Ovary (tissue), 10 donors: ENCODE measurements at regions of chr2 and their contacts with region 1.

Region 1: DNA sequence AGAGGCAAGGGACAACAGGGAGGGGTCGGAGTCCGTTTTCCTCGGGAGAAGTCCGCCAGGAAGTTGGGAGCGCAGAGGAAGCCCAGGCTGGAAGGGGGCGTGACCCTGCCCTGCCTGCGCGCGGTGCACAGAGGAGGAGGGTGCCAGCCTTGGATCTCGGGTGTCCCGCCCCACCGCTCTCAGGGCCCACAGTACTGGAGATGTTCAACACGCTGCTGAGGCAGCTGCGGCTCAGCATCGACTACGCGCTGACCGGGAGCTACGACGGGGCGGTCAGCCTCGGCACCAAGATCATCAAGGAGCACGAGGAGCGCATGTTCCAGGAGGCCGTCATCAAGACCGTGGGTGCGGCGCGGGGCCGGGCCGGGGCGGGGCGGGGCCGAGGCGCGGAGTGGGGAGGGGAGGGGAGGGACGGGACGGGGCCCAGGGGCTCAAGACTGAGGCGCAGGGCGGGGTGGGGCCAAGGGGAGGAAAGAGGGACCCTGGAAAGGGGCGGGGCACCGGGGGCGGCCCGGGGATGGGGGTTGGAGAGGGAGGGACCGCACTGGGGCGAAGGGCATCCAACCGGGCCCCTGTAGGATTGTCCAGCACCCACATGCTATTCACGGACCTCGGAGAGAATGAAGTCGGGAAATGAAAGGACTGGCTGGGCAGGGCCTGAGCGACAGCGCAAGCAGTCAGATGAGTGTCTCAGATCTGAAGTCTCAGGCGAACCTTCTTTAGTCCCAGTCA is 36.6 kb downstream of the POMC start:
- DNase-seq: peak in 3 of 5 donors; percentile 18 to 57 (median 40)
- H3K4me3 ChIP-seq: no peak overlapping the region
- H3K27ac ChIP-seq: no peak overlapping the region
- H3K4me1 ChIP-seq: peaks cover 2% of the 10 kb centered on the region
- H3K27me3 ChIP-seq: no peaks in the 10 kb centered on the region
- CTCF ChIP-seq: no peak
- EP300 ChIP-seq: no peak
- POLR2A ChIP-seq: no peak

Region 2: DNA sequence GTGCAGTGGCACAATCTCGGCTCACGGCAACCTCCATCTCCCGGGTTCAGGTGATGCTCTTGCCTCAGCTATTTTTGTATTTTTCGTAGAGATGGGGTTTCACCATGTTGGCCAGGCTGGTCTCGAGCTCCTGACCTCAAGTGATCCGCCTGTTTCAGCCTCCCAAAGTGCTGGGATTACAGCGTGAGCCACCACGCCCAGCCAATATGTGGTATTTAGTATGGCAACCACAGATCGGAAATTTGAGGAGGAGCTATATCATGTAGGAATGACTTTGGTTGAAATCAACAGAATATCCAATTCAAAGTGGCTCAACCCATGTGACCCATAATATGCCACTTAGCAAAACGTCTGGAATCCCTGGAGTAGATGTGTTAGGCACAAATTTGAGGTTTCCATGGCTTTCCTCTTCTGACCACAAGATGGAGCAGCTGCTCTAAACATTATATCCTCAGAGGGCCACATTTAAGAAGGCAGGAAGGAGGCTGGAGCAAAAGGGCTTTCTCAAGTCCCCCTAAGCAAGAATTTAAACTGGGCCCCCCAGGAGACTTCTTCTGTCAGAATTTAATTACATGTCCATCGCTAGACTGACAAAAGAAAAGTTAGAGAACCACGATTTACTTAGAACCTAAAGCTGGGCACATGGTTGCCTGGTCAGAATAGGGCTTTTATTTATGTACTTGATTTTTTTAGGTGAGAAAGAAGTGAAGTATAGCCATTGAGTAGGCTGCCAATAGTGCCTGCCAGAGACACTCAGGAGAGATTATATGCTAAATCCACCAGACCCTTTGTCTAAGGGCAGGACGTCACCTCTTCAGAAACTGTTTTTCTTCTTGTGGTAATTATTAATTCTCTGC is 721.8 kb before region 1 on chr2:
- intact Hi-C with region 1: loop called in 2 of 4 experiments (anchors 5 to 10 kb)
- DNase-seq: peak in 1 of 5 donors; percentile 59
- H3K4me3 ChIP-seq: no peak overlapping the region
- H3K27ac ChIP-seq: no peak overlapping the region
- H3K4me1 ChIP-seq: no peaks in the 10 kb centered on the region
- H3K27me3 ChIP-seq: no peaks in the 10 kb centered on the region
- CTCF ChIP-seq: peak; percentile 46 to 84 (median 78)
- EP300 ChIP-seq: no peak
- POLR2A ChIP-seq: no peak

Region 3: DNA sequence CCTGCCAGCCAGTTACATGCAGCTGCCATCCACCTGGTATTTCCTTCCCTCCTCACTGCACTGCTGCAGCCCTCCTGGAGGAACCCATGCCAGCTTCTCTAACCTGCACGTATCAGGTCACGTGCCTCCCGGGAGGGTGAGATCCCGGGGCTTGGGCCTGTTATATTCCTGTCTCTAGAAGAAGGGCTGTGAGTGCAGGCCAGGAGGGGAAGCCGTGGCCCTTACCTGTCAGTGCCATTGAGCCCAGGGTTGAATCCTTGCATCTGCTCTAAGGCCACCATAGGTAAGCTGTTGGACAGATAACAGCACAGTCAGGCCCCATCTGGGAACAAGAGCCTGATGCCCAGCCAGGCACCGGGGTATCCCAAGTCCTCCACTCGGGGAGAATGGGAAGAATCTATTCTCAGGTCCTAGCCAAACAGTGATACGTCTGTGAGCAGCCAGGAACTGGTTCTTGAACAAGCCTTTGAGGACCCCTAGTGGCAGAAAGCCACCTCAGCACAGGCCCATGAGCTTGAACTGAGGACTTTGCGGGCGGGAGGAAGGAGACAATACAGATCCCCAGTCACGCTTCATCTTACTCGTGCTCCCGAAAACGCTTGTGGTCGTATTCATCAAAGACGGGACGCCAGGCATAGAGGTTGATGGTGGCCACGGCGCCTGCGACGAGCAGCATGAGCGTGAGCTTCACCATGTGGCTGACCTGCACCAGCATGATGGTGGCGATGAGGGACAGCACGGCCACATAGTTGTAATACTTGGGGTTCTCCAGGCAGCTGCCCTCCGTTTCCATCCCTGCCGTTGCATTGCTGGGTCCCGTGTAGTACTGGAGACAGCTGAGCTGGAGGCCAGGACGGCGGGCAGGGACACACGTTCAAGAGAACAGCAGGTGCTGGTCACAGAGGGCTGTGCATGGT is 304.2 kb before region 1 on chr2:
- intact Hi-C with region 1: loop called in 2 of 4 experiments (anchors 10 kb)
- DNase-seq: peak; percentile 78 to 89 (median 83)
- H3K4me3 ChIP-seq: no peak overlapping the region
- H3K27ac ChIP-seq: no peak overlapping the region
- H3K4me1 ChIP-seq: no peaks in the 10 kb centered on the region
- H3K27me3 ChIP-seq: no peaks in the 10 kb centered on the region
- CTCF ChIP-seq: peak; percentile 81 to 85 (median 83)
- EP300 ChIP-seq: no peak
- POLR2A ChIP-seq: no peak

Region 4: DNA sequence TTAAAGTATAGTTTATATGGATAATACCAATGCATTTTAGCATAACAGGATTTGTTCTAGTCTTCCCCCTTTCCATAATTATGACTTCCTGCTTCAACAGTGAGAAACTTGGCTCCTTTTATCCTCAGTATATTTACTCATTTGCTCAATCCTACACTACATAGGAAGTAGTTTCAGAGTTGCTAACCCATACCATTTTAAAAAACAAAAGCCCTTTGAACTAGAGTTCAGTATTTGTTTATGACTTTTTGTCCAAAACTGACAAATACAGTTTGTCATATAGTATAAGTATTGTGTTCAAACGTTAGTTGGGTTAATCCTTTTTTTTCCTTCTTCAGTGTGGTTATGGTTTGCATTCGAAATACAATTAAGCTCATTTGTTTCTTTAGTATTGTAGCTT is 154.1 kb before region 1 on chr2:
- intact Hi-C with region 1: loop called in 3 of 4 experiments (anchors 5 kb)
- DNase-seq: no peak
- H3K4me3 ChIP-seq: no peak overlapping the region
- H3K27ac ChIP-seq: no peak overlapping the region
- H3K4me1 ChIP-seq: peaks cover 1% of the 10 kb centered on the region
- H3K27me3 ChIP-seq: no peaks in the 10 kb centered on the region
- CTCF ChIP-seq: no peak
- EP300 ChIP-seq: no peak
- POLR2A ChIP-seq: no peak

Region 5: GRCh38 chr2:25032094-25032493 is 99.6 kb before region 1 on chr2:
- intact Hi-C with region 1: loop called in 1 of 4 experiments (anchors 10 kb)
- DNase-seq: no peak
- H3K4me3 ChIP-seq: no peak overlapping the region
- H3K27ac ChIP-seq: no peak overlapping the region
- H3K4me1 ChIP-seq: no peaks in the 10 kb centered on the region
- H3K27me3 ChIP-seq: no peaks in the 10 kb centered on the region
- CTCF ChIP-seq: no peak
- EP300 ChIP-seq: no peak
- POLR2A ChIP-seq: no peak